Caco-2 (cell line): ENCODE measurements at regions of chr2 and their contacts with region 1.

Region 1: GRCh38 chr2:111897924-111898702 is at the start of gene MERTK:
- DNase-seq: peak; percentile 96
- H3K4me3 ChIP-seq: peak within 1 kb of the TSS; percentile 90
- H3K4me3 Mint-ChIP-seq: peak within 1 kb of the TSS; percentile 86
- H3K27ac Mint-ChIP-seq: peak within 1 kb of the TSS; percentile 72
- H3K4me1 ChIP-seq: peaks cover 23% of the 10 kb centered on the region
- H3K4me1 Mint-ChIP-seq: peaks cover 35% of the 10 kb centered on the region
- H3K27me3 ChIP-seq: no peaks in the 10 kb centered on the region
- H3K27me3 Mint-ChIP-seq: no peaks in the 10 kb centered on the region
- CTCF ChIP-seq: peak; percentile 62 to 73
- total RNA-seq, gene MERTK: 39.2 and 42.6 TPM in 2 replicates

Region 2: GRCh38 chr2:111687911-111688881 is 209.9 kb before region 1 on chr2:
- CTCF ChIA-PET with region 1: no interaction called
- POLR2A ChIA-PET with region 1: no interaction called
- intact Hi-C with region 1: no loop called
- DNase-seq: no peak
- H3K4me3 ChIP-seq: no peak overlapping the region
- H3K4me3 Mint-ChIP-seq: no peak overlapping the region
- H3K27ac Mint-ChIP-seq: no peak overlapping the region
- H3K4me1 ChIP-seq: peaks cover 6% of the 10 kb centered on the region
- H3K4me1 Mint-ChIP-seq: no peaks in the 10 kb centered on the region
- H3K27me3 ChIP-seq: no peaks in the 10 kb centered on the region
- H3K27me3 Mint-ChIP-seq: peaks cover 2% of the 10 kb centered on the region
- CTCF ChIP-seq: no peak

Region 3: GRCh38 chr2:111883661-111884591 is 14.2 kb before region 1 on chr2 and contains the start of gene ANAPC1:
- CTCF ChIA-PET with region 1: interaction called, 23 read pairs
- POLR2A ChIA-PET with region 1: interaction called, 3 read pairs
- intact Hi-C with region 1: no loop called
- DNase-seq: peak; percentile 88 to 92
- H3K4me3 ChIP-seq: peak within 1 kb of the TSS; percentile 93
- H3K4me3 Mint-ChIP-seq: peak within 1 kb of the TSS; percentile 83
- H3K27ac Mint-ChIP-seq: peak within 1 kb of the TSS; percentile 88
- H3K4me1 ChIP-seq: peaks cover 4% of the 10 kb centered on the region; the same call in 1 of the 2 replicates
- H3K4me1 Mint-ChIP-seq: no peaks in the 10 kb centered on the region
- H3K27me3 ChIP-seq: no peaks in the 10 kb centered on the region
- H3K27me3 Mint-ChIP-seq: no peaks in the 10 kb centered on the region
- CTCF ChIP-seq: peak in 1 of 2 experiments; percentile 17
- total RNA-seq, gene ANAPC1: 97.2 and 110 TPM in 2 replicates

Region 4: DNA sequence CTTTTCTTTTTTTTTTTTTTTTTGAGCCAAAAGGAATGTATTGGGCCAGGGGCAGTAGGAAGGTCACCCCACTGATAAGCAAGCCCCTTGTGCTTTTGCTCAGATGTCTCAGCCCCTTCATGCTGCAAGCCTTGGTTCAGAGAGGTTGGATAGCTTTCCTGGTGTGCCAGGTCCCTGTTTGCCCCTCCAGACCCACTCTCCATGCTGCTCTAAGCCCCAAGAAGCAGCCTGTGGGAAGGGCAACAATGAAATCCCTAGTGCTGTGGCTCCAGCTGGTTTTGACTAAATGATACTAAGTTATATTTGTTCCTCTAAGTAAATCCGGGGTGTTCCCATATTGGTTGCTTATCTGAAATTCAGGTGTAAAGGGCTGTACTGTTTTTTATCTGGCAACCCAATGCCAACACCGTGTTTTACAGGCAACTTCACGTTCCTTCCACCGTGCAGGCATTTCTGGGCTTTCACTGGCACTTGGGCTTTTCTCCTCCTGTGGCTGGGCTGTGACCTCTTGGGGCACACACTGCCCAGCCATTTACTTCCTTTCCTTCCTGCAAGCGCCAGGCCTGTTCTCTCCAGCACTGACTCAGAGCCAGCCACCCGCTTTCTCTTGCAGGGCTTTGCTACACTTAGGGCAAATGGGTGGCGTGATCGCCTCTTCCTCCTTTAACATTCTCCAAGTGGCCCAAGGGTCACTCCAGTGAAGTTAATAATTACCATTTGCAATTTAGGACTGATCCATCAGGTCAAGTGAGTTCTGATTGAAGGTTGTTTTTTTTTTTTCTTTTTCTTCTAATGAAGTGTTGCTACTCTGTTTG is 21.9 kb after region 1 on chr2:
- CTCF ChIA-PET with region 1: interaction called, 11 read pairs
- POLR2A ChIA-PET with region 1: interaction called, 4 read pairs
- intact Hi-C with region 1: loop called (anchors 1 kb)
- DNase-seq: peak; percentile 85 to 92
- H3K4me3 ChIP-seq: peak overlapping the region; percentile 18; the same call in 1 of the 2 replicates
- H3K4me3 Mint-ChIP-seq: peak overlapping the region; percentile 62
- H3K27ac Mint-ChIP-seq: peak overlapping the region; percentile 82
- H3K4me1 ChIP-seq: peaks cover 53% of the 10 kb centered on the region
- H3K4me1 Mint-ChIP-seq: peaks cover 49% of the 10 kb centered on the region
- H3K27me3 ChIP-seq: no peaks in the 10 kb centered on the region
- H3K27me3 Mint-ChIP-seq: no peaks in the 10 kb centered on the region
- CTCF ChIP-seq: no peak

Region 5: DNA sequence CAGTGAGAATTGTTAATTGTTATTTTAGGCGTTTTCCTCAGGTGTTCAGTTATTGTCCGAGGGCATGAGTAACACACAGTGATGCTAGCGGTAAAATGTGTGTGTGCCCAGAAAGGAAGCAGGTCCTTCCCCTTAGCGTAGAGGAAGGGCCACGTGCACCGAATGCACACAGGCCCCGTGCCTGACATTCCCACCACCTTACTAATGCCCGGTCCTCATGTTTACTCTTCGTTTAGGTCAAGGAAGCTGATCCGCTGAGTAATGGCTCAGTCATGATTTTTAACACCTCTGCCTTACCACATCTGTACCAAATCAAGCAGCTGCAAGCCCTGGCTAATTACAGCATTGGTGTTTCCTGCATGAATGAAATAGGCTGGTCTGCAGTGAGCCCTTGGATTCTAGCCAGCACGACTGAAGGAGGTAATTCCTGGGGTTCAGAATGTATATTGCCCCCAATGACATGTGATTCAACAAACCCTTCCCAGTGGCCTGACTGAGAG is 77.0 kb after region 1 on chr2:
- CTCF ChIA-PET with region 1: interaction called, 10 read pairs
- POLR2A ChIA-PET with region 1: no interaction called
- intact Hi-C with region 1: loop called (anchors 5 kb)
- DNase-seq: peak; percentile 72 to 86
- H3K4me3 ChIP-seq: no peak overlapping the region
- H3K4me3 Mint-ChIP-seq: peak overlapping the region; percentile 39
- H3K27ac Mint-ChIP-seq: peak overlapping the region; percentile 63
- H3K4me1 ChIP-seq: peaks cover 39% of the 10 kb centered on the region
- H3K4me1 Mint-ChIP-seq: peaks cover 37% of the 10 kb centered on the region
- H3K27me3 ChIP-seq: no peaks in the 10 kb centered on the region
- H3K27me3 Mint-ChIP-seq: no peaks in the 10 kb centered on the region
- CTCF ChIP-seq: no peak

Region 6: DNA sequence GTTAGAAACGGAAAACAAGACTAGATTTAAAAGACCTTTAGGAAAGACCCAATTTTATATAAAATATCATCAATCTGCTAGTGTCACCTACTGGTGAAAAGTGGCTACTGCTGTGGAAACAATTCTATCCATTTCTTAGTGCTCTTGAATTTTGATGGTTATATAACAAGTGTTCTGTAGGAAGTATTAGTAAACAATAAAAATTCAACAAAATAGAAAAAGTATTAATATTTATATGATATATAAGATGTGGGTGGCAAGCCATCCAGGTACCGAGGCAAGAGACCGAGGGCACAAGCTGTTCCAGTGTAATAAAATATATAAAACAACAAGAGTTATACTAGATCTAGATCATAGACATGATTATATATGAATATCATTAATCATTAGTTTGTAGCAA is 150.8 kb after region 1 on chr2:
- CTCF ChIA-PET with region 1: interaction called, 5 read pairs
- POLR2A ChIA-PET with region 1: interaction called, 4 read pairs
- intact Hi-C with region 1: loop called (anchors 1 kb)
- DNase-seq: peak in 1 of 2 experiments; percentile 51
- H3K4me3 ChIP-seq: no peak overlapping the region
- H3K4me3 Mint-ChIP-seq: no peak overlapping the region
- H3K27ac Mint-ChIP-seq: no peak overlapping the region
- H3K4me1 ChIP-seq: peaks cover 26% of the 10 kb centered on the region
- H3K4me1 Mint-ChIP-seq: peaks cover 21% of the 10 kb centered on the region
- H3K27me3 ChIP-seq: no peaks in the 10 kb centered on the region
- H3K27me3 Mint-ChIP-seq: no peaks in the 10 kb centered on the region
- CTCF ChIP-seq: peak; percentile 71 to 81

Region 7: GRCh38 chr2:112584134-112584890 is 686.2 kb after region 1 on chr2 and contains the start of gene CHCHD5:
- CTCF ChIA-PET with region 1: no interaction called
- POLR2A ChIA-PET with region 1: no interaction called
- intact Hi-C with region 1: loop called (anchors 10 kb)
- DNase-seq: peak; percentile 95 to 96
- H3K4me3 ChIP-seq: peak within 1 kb of the TSS; percentile 67
- H3K4me3 Mint-ChIP-seq: peak within 1 kb of the TSS; percentile 80
- H3K27ac Mint-ChIP-seq: peak within 1 kb of the TSS; percentile 97
- H3K4me1 ChIP-seq: peaks cover 13% of the 10 kb centered on the region
- H3K4me1 Mint-ChIP-seq: peaks cover 8% of the 10 kb centered on the region
- H3K27me3 ChIP-seq: no peaks in the 10 kb centered on the region
- H3K27me3 Mint-ChIP-seq: no peaks in the 10 kb centered on the region
- CTCF ChIP-seq: no peak
- total RNA-seq, gene CHCHD5: 50.7 and 56.0 TPM in 2 replicates